Heart left ventricle (tissue), 16 donors: ENCODE measurements at regions of chrX and their contacts with region 1.

Region 1: GRCh38 chrX:46758906-46759644 is at the start of gene SLC9A7:
- DNase-seq: peak; percentile 59 to 87 (median 69)
- ATAC-seq: peak; percentile 55 to 90 (median 86)
- H3K4me3 ChIP-seq: peak within 1 kb of the TSS; percentile 9 to 61 (median 48)
- H3K27ac ChIP-seq: peak within 1 kb of the TSS in 2 of 12 donors; percentile 9 to 24
- H3K4me1 ChIP-seq: peaks cover 0 to 5% (median 0%) of the 10 kb centered on the region in 12 donors
- H3K27me3 ChIP-seq: peaks cover 0 to 23% (median 0%) of the 10 kb centered on the region in 9 donors
- CTCF ChIP-seq: peak; percentile 65 to 84 (median 72)
- POLR2A ChIP-seq: no peak
- total RNA-seq, gene SLC9A7: 1.9 to 8.6 (median 2.6) TPM

Region 2: GRCh38 chrX:46693149-46693548 is 65.9 kb before region 1 on chrX:
- intact Hi-C with region 1: no loop called
- DNase-seq: no peak
- ATAC-seq: no peak
- H3K4me3 ChIP-seq: no peak overlapping the region
- H3K27ac ChIP-seq: no peak overlapping the region
- H3K4me1 ChIP-seq: no peaks in the 10 kb centered on the region
- H3K27me3 ChIP-seq: peaks cover 0 to 15% (median 0%) of the 10 kb centered on the region in 9 donors
- CTCF ChIP-seq: no peak
- POLR2A ChIP-seq: no peak

Region 3: DNA sequence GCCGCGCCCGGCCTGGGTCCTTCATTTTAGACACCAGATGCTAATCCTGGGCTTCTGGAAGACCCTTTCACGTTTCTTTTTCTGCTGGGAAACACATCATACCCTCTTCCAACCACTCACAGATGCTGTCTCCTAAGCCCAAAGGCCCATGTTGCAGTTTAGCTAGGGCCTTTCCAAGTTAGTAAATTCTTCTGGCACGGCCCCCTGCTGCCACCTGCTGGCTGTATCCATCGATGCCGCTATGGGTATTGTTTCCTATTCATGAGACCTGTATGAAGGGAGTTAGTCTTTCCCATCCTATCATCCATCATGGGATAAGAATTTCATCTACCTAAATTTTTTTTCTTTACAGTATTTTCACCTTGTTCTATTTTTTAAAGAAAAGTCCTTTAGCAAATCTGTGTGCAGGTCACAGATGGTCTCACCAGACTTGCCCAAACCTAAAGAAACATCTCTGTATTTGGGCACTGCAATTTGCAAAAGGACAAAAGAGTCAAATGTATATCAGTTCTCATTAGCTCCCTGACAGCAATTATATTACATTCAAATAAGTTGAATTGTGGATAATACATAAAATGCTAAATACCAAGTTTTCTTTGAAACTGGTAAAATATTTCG is 37.6 kb after region 1 on chrX:
- intact Hi-C with region 1: loop called in 9 of 10 experiments (anchors 1 to 5 kb)
- DNase-seq: peak; percentile 50 to 78 (median 66)
- ATAC-seq: peak in 3 of 4 donors; percentile 59 to 76 (median 67)
- H3K4me3 ChIP-seq: no peak overlapping the region
- H3K27ac ChIP-seq: no peak overlapping the region
- H3K4me1 ChIP-seq: peaks cover 0 to 14% (median 0%) of the 10 kb centered on the region in 12 donors
- H3K27me3 ChIP-seq: peaks cover 0 to 5% (median 0%) of the 10 kb centered on the region in 9 donors
- CTCF ChIP-seq: peak; percentile 62 to 79 (median 70)
- POLR2A ChIP-seq: no peak

Region 4: DNA sequence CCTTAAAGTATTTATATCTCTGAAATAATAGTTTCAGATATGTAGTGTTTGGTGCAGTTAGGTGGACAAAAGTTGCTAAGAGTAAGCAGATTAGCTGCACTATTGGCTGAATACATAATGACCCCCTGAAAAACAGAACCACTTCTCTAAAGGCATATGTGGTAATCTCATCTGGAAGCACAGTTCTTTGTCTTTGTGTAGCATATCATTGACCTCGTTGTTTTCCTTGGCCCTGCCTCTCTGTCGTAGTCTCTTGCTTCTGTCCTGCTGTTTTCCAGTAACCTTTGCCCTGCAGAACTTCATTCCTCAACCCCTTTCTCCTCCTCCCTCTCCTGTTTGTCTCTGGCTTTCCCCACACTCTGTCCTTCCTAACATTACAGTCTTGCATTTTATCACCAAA is 194.5 kb after region 1 on chrX:
- intact Hi-C with region 1: loop called in 1 of 10 experiments (anchors 5 kb)
- DNase-seq: no peak
- ATAC-seq: peak in 3 of 4 donors; percentile 31 to 61 (median 34)
- H3K4me3 ChIP-seq: no peak overlapping the region
- H3K27ac ChIP-seq: peak overlapping the region in 1 of 12 donors; percentile 46
- H3K4me1 ChIP-seq: peaks cover 0 to 25% (median 8%) of the 10 kb centered on the region in 12 donors
- H3K27me3 ChIP-seq: peaks cover 0 to 4% (median 0%) of the 10 kb centered on the region in 9 donors
- CTCF ChIP-seq: no peak
- POLR2A ChIP-seq: no peak

Region 5: DNA sequence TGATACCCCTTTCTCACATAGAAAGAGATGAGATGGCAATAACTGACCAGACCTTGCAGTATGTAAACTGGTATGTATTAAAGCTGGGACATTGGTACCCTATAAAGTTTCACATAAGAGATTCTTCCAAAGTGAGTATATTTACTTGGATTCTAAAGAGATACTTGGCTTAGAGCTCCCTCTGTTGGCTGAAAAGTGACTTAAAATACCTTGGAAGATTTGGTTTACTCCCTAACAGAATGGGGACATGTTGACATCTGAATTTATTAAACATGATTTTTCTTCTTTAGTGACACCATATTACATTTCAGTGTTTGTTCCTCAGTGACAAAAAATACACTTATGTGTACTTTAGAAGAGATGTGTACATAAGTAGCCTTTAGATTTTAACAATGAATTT is 271.3 kb after region 1 on chrX:
- intact Hi-C with region 1: loop called in 6 of 10 experiments (anchors 2 to 5 kb)
- DNase-seq: peak in 1 of 5 donors; percentile 5
- ATAC-seq: no peak
- H3K4me3 ChIP-seq: no peak overlapping the region
- H3K27ac ChIP-seq: no peak overlapping the region
- H3K4me1 ChIP-seq: no peaks in the 10 kb centered on the region
- H3K27me3 ChIP-seq: peaks cover 0 to 34% (median 0%) of the 10 kb centered on the region in 9 donors
- CTCF ChIP-seq: peak; percentile 47 to 68 (median 58)
- POLR2A ChIP-seq: no peak

Region 6: DNA sequence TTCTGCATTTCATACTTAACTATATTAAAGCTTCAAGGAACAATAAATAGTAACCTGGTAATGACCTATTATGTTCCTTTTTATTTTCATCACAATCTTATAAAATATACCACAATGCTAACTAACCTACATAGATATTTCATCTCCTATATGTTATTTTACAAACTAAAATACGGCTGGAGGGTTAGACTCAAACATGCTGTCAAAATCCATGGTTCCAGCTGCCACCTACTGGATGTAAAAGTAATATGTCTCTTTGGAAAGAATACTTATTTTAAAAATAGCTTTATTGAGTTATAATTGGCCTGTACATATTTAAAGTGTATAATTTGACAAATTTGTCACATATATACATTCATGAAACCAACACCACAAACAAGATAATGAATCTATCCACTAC is 334.2 kb after region 1 on chrX:
- intact Hi-C with region 1: loop called in 1 of 10 experiments (anchors 5 kb)
- DNase-seq: no peak
- ATAC-seq: no peak
- H3K4me3 ChIP-seq: no peak overlapping the region
- H3K27ac ChIP-seq: no peak overlapping the region
- H3K4me1 ChIP-seq: no peaks in the 10 kb centered on the region
- H3K27me3 ChIP-seq: peaks cover 0 to 8% (median 0%) of the 10 kb centered on the region in 9 donors
- CTCF ChIP-seq: peak in 10 of 12 donors; percentile 10 to 53 (median 36)
- POLR2A ChIP-seq: no peak

Region 7: DNA sequence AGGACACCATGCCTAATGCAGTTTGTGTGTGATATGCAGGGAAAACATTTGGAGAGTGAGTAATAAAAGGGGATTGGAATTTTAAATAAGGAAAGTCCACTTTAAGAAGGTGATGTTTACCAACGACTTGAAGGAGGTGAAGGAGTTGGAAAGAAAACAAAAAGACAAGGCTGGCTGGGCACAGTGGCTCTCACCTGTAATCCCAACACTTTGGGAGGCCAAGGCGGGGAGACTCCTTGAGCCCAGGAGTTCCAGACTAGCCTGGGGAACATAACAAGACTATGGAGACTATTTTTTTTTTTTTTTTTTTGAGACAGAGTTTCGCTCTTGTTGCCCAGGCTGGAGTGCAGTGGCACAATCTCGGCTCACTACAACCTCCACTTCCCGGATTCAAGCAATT is 374.4 kb after region 1 on chrX:
- intact Hi-C with region 1: no loop called
- DNase-seq: no peak
- ATAC-seq: no peak
- H3K4me3 ChIP-seq: no peak overlapping the region
- H3K27ac ChIP-seq: no peak overlapping the region
- H3K4me1 ChIP-seq: peaks cover 0 to 10% (median 6%) of the 10 kb centered on the region in 12 donors
- H3K27me3 ChIP-seq: peaks cover 0 to 20% (median 0%) of the 10 kb centered on the region in 9 donors
- CTCF ChIP-seq: no peak
- POLR2A ChIP-seq: no peak